H1 (cell line): ENCODE measurements at regions of chr17 and their contacts with region 1.

Region 1: DNA sequence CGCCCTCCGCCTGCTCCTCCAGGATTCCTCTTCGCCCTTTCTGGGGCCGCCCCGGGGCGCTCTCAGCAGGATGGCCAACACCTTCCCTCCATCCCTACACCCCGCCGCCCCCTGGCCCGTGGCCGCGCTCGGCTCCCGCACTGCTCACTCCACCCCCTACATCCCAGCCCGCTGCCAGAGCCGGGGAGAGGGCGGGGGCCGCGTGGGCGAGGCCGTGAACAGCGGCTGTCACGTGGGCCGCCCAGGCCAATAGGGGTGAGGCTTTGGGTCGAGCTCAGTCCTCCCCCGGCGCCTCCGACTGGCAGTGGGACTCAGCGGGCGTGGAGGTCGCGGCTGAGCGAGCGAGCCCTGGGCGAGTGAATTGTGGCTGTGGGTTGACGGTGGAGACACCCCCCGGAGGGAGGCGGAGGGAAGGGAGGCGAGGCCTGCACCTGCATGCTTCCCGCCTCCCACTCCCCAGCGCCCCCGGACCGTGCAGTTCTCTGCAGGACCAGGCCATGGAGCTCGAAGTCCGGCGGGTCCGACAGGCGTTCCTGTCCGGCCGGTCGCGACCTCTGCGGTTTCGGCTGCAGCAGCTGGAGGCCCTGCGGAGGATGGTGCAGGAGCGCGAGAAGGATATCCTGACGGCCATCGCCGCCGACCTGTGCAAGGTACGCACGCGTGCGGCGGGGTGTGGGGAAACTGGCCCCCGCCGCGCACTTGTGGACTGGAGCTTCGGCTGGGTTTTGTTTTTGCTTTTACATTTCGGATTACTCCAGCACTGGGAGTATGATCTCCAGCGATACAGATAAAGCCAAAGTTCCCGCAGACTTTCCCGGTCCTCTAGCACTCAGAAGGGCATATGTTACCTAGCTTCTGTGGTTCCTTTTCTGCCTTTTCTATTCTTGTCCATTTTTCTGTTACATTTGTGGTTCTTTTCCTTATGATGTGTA is at the start of gene ALDH3A2:
- DNase-seq: peak; percentile 68 to 94
- H3K4me3 ChIP-seq: peak within 1 kb of the TSS; percentile 70 to 75 (median 72)
- H3K27ac ChIP-seq: peak within 1 kb of the TSS; percentile 13; the same call in 1 of the 2 replicates
- H3K4me1 ChIP-seq: peaks cover 6 to 14% (median 11%) of the 10 kb centered on the region in 4 experiments
- H3K27me3 ChIP-seq: peaks cover 0 to 2% (median 0%) of the 10 kb centered on the region in 4 experiments; a peak in 2 of 7 replicates
- CTCF ChIP-seq: peak; percentile 11 to 31 (median 27)
- EP300 ChIP-seq: no peak
- POLR2A ChIP-seq: peak in 1 of 2 experiments; percentile 88; a peak in 2 of 3 replicates
- RAD21 ChIP-seq: peak; percentile 26 to 56; a peak in 3 of 4 replicates
- total RNA-seq, gene ALDH3A2: 70.7 and 72.9 TPM in 2 replicates

Region 2: GRCh38 chr17:19513897-19514488 is 134.7 kb before region 1 on chr17:
- CTCF ChIA-PET with region 1: interaction called, 11 read pairs
- POLR2A ChIA-PET with region 1: no interaction called
- DNase-seq: peak in 1 of 2 experiments; percentile 84
- H3K4me3 ChIP-seq: no peak overlapping the region
- H3K27ac ChIP-seq: no peak overlapping the region
- H3K4me1 ChIP-seq: peaks cover 0 to 3% (median 0%) of the 10 kb centered on the region in 4 experiments; a peak in 1 of 7 replicates
- H3K27me3 ChIP-seq: no peaks in the 10 kb centered on the region
- CTCF ChIP-seq: peak; percentile 83 to 95 (median 95)
- EP300 ChIP-seq: no peak
- POLR2A ChIP-seq: no peak
- RAD21 ChIP-seq: peak; percentile 95 to 97

Region 3: GRCh38 chr17:19630661-19631060 is 18.1 kb before region 1 on chr17:
- CTCF ChIA-PET with region 1: interaction called, 10 read pairs
- POLR2A ChIA-PET with region 1: interaction called, 3 read pairs
- DNase-seq: no peak
- H3K4me3 ChIP-seq: no peak overlapping the region
- H3K27ac ChIP-seq: no peak overlapping the region
- H3K4me1 ChIP-seq: no peaks in the 10 kb centered on the region
- H3K27me3 ChIP-seq: no peaks in the 10 kb centered on the region
- CTCF ChIP-seq: no peak
- EP300 ChIP-seq: no peak
- POLR2A ChIP-seq: no peak
- RAD21 ChIP-seq: no peak

Region 4: GRCh38 chr17:19686400-19687090 is 37.8 kb after region 1 on chr17:
- CTCF ChIA-PET with region 1: no interaction called
- POLR2A ChIA-PET with region 1: no interaction called
- DNase-seq: no peak
- H3K4me3 ChIP-seq: no peak overlapping the region
- H3K27ac ChIP-seq: no peak overlapping the region
- H3K4me1 ChIP-seq: no peaks in the 10 kb centered on the region
- H3K27me3 ChIP-seq: no peaks in the 10 kb centered on the region
- CTCF ChIP-seq: no peak
- EP300 ChIP-seq: no peak
- POLR2A ChIP-seq: no peak
- RAD21 ChIP-seq: no peak

Region 5: GRCh38 chr17:19703106-19703827 is 54.5 kb after region 1 on chr17:
- CTCF ChIA-PET with region 1: interaction called, 3 read pairs
- POLR2A ChIA-PET with region 1: interaction called, 10 read pairs
- DNase-seq: no peak
- H3K4me3 ChIP-seq: no peak overlapping the region
- H3K27ac ChIP-seq: no peak overlapping the region
- H3K4me1 ChIP-seq: peaks cover 9 to 31% (median 20%) of the 10 kb centered on the region in 4 experiments
- H3K27me3 ChIP-seq: no peaks in the 10 kb centered on the region
- CTCF ChIP-seq: no peak
- EP300 ChIP-seq: no peak
- POLR2A ChIP-seq: no peak
- RAD21 ChIP-seq: no peak

Region 6: GRCh38 chr17:19718604-19719354 is 70.0 kb after region 1 on chr17:
- CTCF ChIA-PET with region 1: interaction called, 56 read pairs
- POLR2A ChIA-PET with region 1: interaction called, 16 read pairs
- DNase-seq: peak in 1 of 2 experiments; percentile 78
- H3K4me3 ChIP-seq: no peak overlapping the region
- H3K27ac ChIP-seq: no peak overlapping the region
- H3K4me1 ChIP-seq: peaks cover 0 to 6% (median 0%) of the 10 kb centered on the region in 4 experiments; a peak in 2 of 7 replicates
- H3K27me3 ChIP-seq: no peaks in the 10 kb centered on the region
- CTCF ChIP-seq: peak; percentile 63 to 79 (median 73)
- EP300 ChIP-seq: no peak
- POLR2A ChIP-seq: no peak
- RAD21 ChIP-seq: peak; percentile 86 to 87